ENCODE measurements at regions of chr11 and their contacts with region 1.

Region 1: GRCh38 chr11:1832211-1832919 is 2.4 kb upstream of the SYT8 start:
- DNase-seq: peak; percentile 66
- H3K4me3 Mint-ChIP-seq: no peak overlapping the region
- H3K27ac Mint-ChIP-seq: no peak overlapping the region
- H3K4me1 Mint-ChIP-seq: no peaks in the 10 kb centered on the region
- H3K27me3 Mint-ChIP-seq: peaks cover 5% of the 10 kb centered on the region

Region 2: GRCh38 chr11:1701091-1701807 is 131.1 kb before region 1 on chr11:
- CTCF ChIA-PET with region 1: interaction called, 48 read pairs
- POLR2A ChIA-PET with region 1: no interaction called
- intact Hi-C with region 1: no loop called
- DNase-seq: peak; percentile 29
- H3K4me3 Mint-ChIP-seq: no peak overlapping the region
- H3K27ac Mint-ChIP-seq: no peak overlapping the region
- H3K4me1 Mint-ChIP-seq: peaks cover 9% of the 10 kb centered on the region
- H3K27me3 Mint-ChIP-seq: peaks cover 3% of the 10 kb centered on the region

Region 3: DNA sequence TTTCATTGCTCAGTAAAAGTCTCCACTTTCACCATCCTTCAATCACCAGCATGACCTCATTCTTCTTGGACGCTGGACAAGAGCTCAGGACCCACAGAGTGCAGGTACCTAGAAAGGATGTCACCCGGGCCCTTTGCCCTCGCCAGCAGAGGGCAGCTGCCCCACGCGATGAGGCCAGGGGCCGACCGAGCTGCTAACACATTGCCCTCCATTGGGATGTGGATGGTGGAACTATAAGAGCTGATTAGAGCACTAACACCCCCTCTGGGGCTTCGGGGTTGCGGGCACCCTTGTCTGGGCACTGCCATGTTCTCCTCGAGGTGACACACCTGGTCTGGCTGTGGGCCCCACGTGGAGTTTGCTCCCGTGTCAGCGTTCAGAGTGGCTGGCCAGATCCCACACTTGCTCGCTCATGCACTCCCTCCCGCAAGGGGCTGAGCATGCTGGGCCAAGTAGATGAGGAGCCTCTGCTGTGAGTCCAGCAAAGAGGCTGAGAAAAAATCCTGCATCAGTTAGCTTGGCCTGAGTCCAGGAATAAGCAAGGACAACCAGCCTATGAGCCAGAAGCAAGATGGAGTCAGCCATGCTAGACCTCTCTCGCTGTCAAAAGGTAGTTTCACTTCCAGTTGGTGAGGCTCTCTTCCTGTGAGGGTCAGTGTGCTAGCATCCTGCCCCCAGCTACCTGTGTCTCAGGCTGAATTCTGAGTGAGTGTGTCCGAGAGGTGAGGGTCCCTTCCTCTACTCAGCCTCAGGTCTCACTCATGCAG is 125.5 kb before region 1 on chr11:
- CTCF ChIA-PET with region 1: interaction called, 48 read pairs
- POLR2A ChIA-PET with region 1: no interaction called
- intact Hi-C with region 1: no loop called
- DNase-seq: peak; percentile 45
- H3K4me3 Mint-ChIP-seq: no peak overlapping the region
- H3K27ac Mint-ChIP-seq: no peak overlapping the region
- H3K4me1 Mint-ChIP-seq: no peaks in the 10 kb centered on the region
- H3K27me3 Mint-ChIP-seq: no peaks in the 10 kb centered on the region

Region 4: DNA sequence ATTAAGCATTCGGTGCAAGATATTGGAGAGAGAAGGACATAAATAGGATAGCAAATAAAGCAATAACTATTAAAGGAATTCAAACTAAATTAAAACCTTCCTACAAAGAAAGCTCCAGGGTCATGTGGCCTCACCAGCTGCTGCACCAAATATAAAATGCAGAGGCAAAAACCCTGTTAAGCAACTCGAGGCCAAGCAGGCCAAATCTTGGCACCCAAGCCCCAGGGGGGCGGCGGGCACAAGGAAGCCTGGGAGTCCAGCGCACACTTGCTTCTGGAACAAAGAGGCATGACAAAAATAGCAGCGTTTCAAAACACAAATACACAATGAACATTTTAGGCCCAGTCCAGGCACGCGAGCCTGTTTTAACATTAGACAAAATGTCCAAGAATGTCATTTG is 114.6 kb before region 1 on chr11:
- CTCF ChIA-PET with region 1: interaction called, 10 read pairs
- POLR2A ChIA-PET with region 1: no interaction called
- intact Hi-C with region 1: no loop called
- DNase-seq: no peak
- H3K4me3 Mint-ChIP-seq: no peak overlapping the region
- H3K27ac Mint-ChIP-seq: no peak overlapping the region
- H3K4me1 Mint-ChIP-seq: no peaks in the 10 kb centered on the region
- H3K27me3 Mint-ChIP-seq: peaks cover 6% of the 10 kb centered on the region

Region 5: GRCh38 chr11:1796413-1797011 is 35.9 kb before region 1 on chr11:
- CTCF ChIA-PET with region 1: interaction called, 11 read pairs
- POLR2A ChIA-PET with region 1: no interaction called
- intact Hi-C with region 1: no loop called
- DNase-seq: no peak
- H3K4me3 Mint-ChIP-seq: no peak overlapping the region
- H3K27ac Mint-ChIP-seq: no peak overlapping the region
- H3K4me1 Mint-ChIP-seq: peaks cover 2% of the 10 kb centered on the region
- H3K27me3 Mint-ChIP-seq: peaks cover 16% of the 10 kb centered on the region

Region 6: GRCh38 chr11:1844221-1845094 is 12.1 kb after region 1 on chr11:
- CTCF ChIA-PET with region 1: interaction called, 32 read pairs
- POLR2A ChIA-PET with region 1: no interaction called
- intact Hi-C with region 1: no loop called
- DNase-seq: peak; percentile 77
- H3K4me3 Mint-ChIP-seq: peak overlapping the region; percentile 67
- H3K27ac Mint-ChIP-seq: peak overlapping the region; percentile 77
- H3K4me1 Mint-ChIP-seq: peaks cover 47% of the 10 kb centered on the region
- H3K27me3 Mint-ChIP-seq: no peaks in the 10 kb centered on the region

Region 7: GRCh38 chr11:3021125-3021524 is 1188.8 kb after region 1 on chr11:
- CTCF ChIA-PET with region 1: no interaction called
- POLR2A ChIA-PET with region 1: no interaction called
- intact Hi-C with region 1: no loop called
- DNase-seq: peak; percentile 39
- H3K4me3 Mint-ChIP-seq: no peak overlapping the region
- H3K27ac Mint-ChIP-seq: no peak overlapping the region
- H3K4me1 Mint-ChIP-seq: peaks cover 30% of the 10 kb centered on the region
- H3K27me3 Mint-ChIP-seq: no peaks in the 10 kb centered on the region

Measured in activated CD4-positive, alpha-beta memory T cell treated with anti-CD3 and anti-CD28 coated beads for 36 hours (primary cell).